Astrocyte of the cerebellum (primary cell): ENCODE measurements at regions of chr22 and their contacts with region 1.

Region 1: DNA sequence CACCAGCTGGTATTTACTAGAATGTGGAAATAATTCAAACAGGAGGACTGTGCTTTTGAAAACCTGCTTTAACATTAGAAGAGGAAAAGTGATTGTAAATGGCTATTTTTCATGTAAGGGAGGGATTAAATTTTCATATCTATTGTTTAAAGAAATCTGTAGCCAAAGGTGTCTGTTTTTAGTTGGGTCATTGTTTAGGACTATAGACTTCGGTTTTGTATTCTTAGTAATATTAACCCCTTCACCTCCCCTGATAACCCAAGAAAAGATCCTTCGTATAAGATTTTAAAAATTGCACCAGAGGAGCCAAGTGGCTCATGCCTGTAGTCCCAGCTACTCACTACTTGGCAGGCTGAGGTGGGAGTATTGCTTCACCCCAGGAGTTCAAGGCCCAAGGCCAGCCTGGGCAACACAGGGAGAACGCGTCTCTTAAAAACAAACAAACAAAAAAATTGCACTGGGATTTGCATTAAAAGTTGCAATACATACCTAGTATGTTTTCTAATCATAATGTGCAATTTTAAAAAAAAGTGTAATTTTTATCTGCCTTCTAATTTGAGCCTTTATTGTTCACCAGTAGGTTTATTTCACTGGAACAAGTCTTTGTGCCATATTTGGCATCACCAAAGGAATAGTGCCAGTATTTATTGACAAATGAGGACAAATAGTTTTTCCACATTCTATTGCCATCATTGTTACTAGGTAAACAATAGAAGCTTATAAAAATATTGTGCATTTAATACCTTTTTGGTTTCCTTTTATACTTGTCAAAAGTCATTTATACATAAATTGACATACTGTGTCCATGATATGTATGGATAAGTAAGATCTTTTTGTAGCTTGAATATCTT is 34.3 kb downstream of the MTMR3 start:
- DNase-seq: no peak
- H3K4me3 ChIP-seq: no peak overlapping the region
- CTCF ChIP-seq: no peak

Region 2: GRCh38 chr22:29816128-29816527 is 101.1 kb before region 1 on chr22:
- in situ Hi-C with region 1: loop called (anchors 5 kb)
- DNase-seq: no peak
- H3K4me3 ChIP-seq: no peak overlapping the region
- CTCF ChIP-seq: no peak